ENCODE measurements at regions of chr9 and their contacts with region 1.

Region 1: GRCh38 chr9:127916665-127917613 is at the start of gene ST6GALNAC4:
- DNase-seq: peak; percentile 85 to 91 (median 91)
- H3K4me3 ChIP-seq: peak within 1 kb of the TSS; percentile 41 to 94 (median 77)
- H3K27ac ChIP-seq: peak within 1 kb of the TSS in 1 of 2 experiments; percentile 66
- H3K4me1 ChIP-seq: peaks cover 2 to 62% (median 48%) of the 10 kb centered on the region in 4 experiments
- H3K27me3 ChIP-seq: peaks cover 0 to 2% (median 0%) of the 10 kb centered on the region in 5 experiments

Region 2: GRCh38 chr9:127586537-127586936 is 330.4 kb before region 1 on chr9:
- CTCF ChIA-PET with region 1: interaction called, 16 read pairs
- POLR2A ChIA-PET with region 1: no interaction called
- DNase-seq: peak; percentile 63 to 74 (median 67)
- H3K4me3 ChIP-seq: no peak overlapping the region
- H3K27ac ChIP-seq: no peak overlapping the region
- H3K4me1 ChIP-seq: peaks cover 0 to 4% (median 1%) of the 10 kb centered on the region in 4 experiments
- H3K27me3 ChIP-seq: no peaks in the 10 kb centered on the region

Region 3: DNA sequence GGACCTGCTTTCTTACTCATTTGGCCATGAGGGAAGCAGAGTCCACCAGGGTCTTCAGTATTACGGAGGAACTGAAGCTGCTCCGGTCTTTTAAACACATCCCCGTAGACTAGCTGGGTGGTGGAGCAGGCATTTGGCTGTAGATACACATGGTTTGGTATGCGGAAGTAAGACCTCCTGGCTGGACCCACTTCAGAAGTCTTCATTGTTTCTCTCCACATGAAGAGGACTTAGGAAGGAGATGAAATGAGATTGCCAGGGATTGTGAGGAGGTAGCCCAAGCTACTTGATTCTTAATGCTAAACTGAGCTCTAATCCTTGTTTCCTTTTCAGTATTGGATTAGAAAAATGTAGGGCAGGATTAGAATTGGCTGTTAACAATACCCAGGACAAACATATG is 272.0 kb before region 1 on chr9:
- CTCF ChIA-PET with region 1: no interaction called
- POLR2A ChIA-PET with region 1: no interaction called
- DNase-seq: no peak
- H3K4me3 ChIP-seq: no peak overlapping the region
- H3K27ac ChIP-seq: no peak overlapping the region
- H3K4me1 ChIP-seq: no peaks in the 10 kb centered on the region
- H3K27me3 ChIP-seq: peaks cover 0 to 4% (median 0%) of the 10 kb centered on the region in 5 experiments

Region 4: DNA sequence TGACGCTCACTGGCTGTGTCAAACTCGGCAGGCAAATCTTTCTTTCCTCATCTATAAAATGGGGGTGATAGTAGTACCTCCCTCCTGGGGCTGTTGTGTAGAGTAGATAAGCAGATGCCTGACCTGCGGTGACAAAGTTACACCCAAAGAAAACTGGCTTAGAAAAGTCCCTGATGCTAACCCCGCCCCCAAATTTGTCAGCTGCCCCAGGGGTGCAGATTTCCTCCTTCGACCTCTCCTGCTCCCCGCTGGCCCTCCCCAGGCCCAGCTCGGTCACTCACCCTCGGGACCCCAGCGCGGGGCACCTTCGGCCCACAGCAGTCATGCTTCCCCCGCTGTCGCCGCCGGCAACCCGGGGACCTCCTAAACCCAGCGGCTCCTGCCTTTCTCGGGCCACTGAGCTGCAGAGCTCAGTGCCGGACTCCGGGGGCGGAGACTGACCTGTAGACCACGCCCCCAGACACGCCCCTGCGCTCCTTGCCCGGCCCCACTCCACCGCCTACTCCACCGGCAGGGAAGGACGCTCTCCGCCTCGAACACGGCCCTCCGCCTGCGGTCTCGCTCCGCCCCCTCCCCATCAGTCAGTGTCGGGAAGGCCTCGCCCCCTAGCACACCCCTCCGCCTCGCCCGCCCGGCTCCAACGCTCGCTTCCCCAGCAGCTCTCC is 145.9 kb before region 1 on chr9:
- CTCF ChIA-PET with region 1: interaction called, 12 read pairs
- POLR2A ChIA-PET with region 1: interaction called, 3 read pairs
- DNase-seq: peak; percentile 98 to 99 (median 99)
- H3K4me3 ChIP-seq: peak overlapping the region; percentile 46 to 83 (median 71)
- H3K27ac ChIP-seq: peak overlapping the region in 1 of 2 experiments; percentile 76
- H3K4me1 ChIP-seq: peaks cover 12 to 70% (median 64%) of the 10 kb centered on the region in 4 experiments
- H3K27me3 ChIP-seq: no peaks in the 10 kb centered on the region

Region 5: GRCh38 chr9:127796225-127796813 is 120.6 kb before region 1 on chr9:
- CTCF ChIA-PET with region 1: interaction called, 14 read pairs
- POLR2A ChIA-PET with region 1: no interaction called
- DNase-seq: peak in 2 of 3 donors; percentile 45 to 63
- H3K4me3 ChIP-seq: peak overlapping the region in 3 of 7 experiments; percentile 16 to 54 (median 32)
- H3K27ac ChIP-seq: peak overlapping the region in 1 of 2 experiments; percentile 55
- H3K4me1 ChIP-seq: peaks cover 19 to 85% (median 65%) of the 10 kb centered on the region in 4 experiments
- H3K27me3 ChIP-seq: no peaks in the 10 kb centered on the region

Region 6: GRCh38 chr9:127844821-127845359 is 72.0 kb before region 1 on chr9:
- CTCF ChIA-PET with region 1: no interaction called
- POLR2A ChIA-PET with region 1: no interaction called
- DNase-seq: no peak
- H3K4me3 ChIP-seq: no peak overlapping the region
- H3K27ac ChIP-seq: no peak overlapping the region
- H3K4me1 ChIP-seq: peaks cover 0 to 3% (median 0%) of the 10 kb centered on the region in 4 experiments
- H3K27me3 ChIP-seq: no peaks in the 10 kb centered on the region

Region 7: DNA sequence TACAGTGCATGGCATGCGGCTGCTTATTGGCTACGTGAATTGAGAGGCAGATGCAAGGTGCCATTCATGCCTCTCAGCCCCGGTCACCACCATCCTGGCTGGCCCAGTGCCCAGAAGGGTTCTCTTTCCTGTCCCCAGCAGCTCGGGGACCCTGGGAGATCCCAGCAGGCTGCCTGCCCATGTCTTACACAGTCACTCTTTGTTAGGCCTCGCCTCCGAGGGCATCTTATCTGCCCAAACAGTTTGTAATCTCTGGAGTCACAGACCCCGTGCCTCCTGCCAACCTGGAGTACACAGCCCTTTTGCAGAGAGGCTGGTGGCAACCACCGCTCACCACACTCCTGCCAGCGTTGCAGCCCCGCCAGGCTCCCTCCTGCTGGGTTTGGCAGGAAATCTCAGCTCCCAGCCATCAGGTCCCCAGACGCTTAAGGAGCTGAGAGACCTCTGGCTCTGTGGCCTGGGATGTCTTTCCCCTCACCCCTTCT is 32.5 kb before region 1 on chr9:
- CTCF ChIA-PET with region 1: interaction called, 17 read pairs
- POLR2A ChIA-PET with region 1: interaction called, 13 read pairs
- DNase-seq: peak; percentile 94 to 99 (median 98)
- H3K4me3 ChIP-seq: peak overlapping the region in 3 of 7 experiments; percentile 1 to 45 (median 23)
- H3K27ac ChIP-seq: peak overlapping the region in 1 of 2 experiments; percentile 54
- H3K4me1 ChIP-seq: peaks cover 4 to 45% (median 39%) of the 10 kb centered on the region in 4 experiments
- H3K27me3 ChIP-seq: no peaks in the 10 kb centered on the region

Region 8: DNA sequence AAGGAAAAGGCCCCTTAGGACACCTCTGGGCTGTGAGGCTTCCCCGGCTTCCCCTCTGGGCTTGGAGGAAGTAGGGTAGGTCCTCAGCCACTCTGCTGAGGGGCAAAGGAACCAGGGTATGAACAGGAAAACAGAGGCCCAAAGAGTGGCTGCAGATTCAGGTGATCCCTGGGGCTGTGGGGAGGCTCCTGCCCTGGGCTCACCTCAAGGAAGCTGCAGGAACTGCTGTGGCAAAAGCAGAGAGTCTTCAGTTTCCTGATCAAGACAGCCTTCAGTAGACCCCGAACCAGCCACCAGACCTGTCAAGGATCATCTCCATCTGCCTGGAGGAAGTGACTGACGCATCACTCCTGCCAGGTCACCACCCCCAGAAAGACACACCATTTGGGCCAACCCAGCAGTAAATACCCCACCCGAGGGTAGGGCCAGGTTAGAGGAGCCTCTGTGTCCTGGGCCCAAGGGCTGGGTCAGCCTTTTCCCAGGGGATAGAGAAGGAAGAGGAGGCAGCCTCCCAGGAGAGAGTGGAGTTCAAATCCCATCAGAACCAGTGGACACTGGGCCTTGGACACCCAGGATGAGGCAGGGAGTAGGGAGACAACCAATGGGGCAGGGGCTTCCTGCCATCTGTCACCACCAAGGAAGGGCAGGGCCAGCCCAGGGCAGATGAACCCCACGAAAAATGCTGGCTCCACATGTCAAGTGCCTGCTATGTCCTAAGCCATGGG is 11.8 kb before region 1 on chr9:
- CTCF ChIA-PET with region 1: interaction called, 15 read pairs
- POLR2A ChIA-PET with region 1: interaction called, 3 read pairs
- DNase-seq: peak in 2 of 3 donors; percentile 57 to 66
- H3K4me3 ChIP-seq: peak overlapping the region in 4 of 7 experiments; percentile 13 to 49 (median 36)
- H3K27ac ChIP-seq: peak overlapping the region; percentile 62 to 79
- H3K4me1 ChIP-seq: peaks cover 9 to 54% (median 44%) of the 10 kb centered on the region in 4 experiments
- H3K27me3 ChIP-seq: no peaks in the 10 kb centered on the region